ENCODE measurements at regions of chr2 and their contacts with region 1.

Region 1: GRCh38 chr2:105950521-105951383 is 206.0 kb downstream of the NCK2 start:
- DNase-seq: peak in 1 of 14 experiments; percentile 48
- ATAC-seq: no peak
- H3K4me3 ChIP-seq: no peak overlapping the region
- H3K4me3 Mint-ChIP-seq: no peak overlapping the region
- H3K27ac ChIP-seq: no peak overlapping the region
- H3K27ac Mint-ChIP-seq: peak overlapping the region; percentile 32
- H3K4me1 ChIP-seq: peaks cover 43% of the 10 kb centered on the region
- H3K4me1 Mint-ChIP-seq: peaks cover 67% of the 10 kb centered on the region
- H3K27me3 ChIP-seq: no peaks in the 10 kb centered on the region
- H3K27me3 Mint-ChIP-seq: no peaks in the 10 kb centered on the region
- CTCF ChIP-seq: no peak

Region 2: GRCh38 chr2:106030287-106031268 is 79.8 kb after region 1 on chr2:
- CTCF ChIA-PET with region 1: no interaction called
- POLR2A ChIA-PET with region 1: no interaction called
- intact Hi-C with region 1: loop called in 1 of 2 experiments (anchors 5 kb)
- DNase-seq: no peak
- ATAC-seq: no peak
- H3K4me3 ChIP-seq: no peak overlapping the region
- H3K4me3 Mint-ChIP-seq: no peak overlapping the region
- H3K27ac ChIP-seq: no peak overlapping the region
- H3K27ac Mint-ChIP-seq: no peak overlapping the region
- H3K4me1 ChIP-seq: peaks cover 14% of the 10 kb centered on the region
- H3K4me1 Mint-ChIP-seq: peaks cover 25% of the 10 kb centered on the region
- H3K27me3 ChIP-seq: no peaks in the 10 kb centered on the region
- H3K27me3 Mint-ChIP-seq: no peaks in the 10 kb centered on the region
- CTCF ChIP-seq: no peak